ENCODE measurements at regions of chr6 and their contacts with region 1.

Region 1: DNA sequence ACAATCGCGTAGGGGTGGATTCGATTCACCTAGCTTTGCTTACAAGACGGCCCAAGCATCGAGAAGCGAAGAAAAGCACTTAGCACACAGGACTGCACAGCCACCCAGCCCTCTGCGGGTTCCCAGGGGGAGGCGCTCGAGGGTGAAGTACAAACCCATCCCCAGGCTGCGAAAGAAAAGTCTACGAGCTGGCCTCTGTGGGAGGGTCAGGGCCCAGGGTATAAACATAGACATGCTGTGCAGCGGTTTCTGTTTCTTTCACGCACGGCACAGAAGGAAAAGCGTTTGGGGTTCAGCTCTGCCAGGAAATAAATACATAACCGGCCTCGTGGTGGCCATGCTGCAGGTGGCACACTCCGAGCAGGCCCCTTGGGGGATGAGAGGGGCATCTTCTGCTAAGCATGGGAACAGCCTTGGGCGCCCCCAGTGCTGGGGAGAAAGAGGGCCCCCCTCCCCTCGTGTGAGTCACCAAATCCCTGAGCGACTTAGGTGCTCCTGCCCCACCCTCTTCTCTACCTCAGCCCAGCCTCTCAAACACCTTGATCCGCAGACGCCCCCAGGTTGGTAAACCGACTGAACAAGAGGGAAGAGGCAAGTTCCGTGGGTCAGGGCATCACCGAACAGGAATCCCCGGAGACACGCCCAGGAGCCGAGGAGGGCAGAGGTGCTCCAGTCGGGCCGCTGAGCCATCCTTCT is 91.6 kb upstream of the RIPOR2 start:
- DNase-seq: peak; percentile 90
- ATAC-seq: peak; percentile 95
- H3K4me3 Mint-ChIP-seq: peak overlapping the region; percentile 62
- H3K27ac Mint-ChIP-seq: peak overlapping the region; percentile 77
- H3K4me1 Mint-ChIP-seq: peaks cover 51% of the 10 kb centered on the region
- H3K27me3 Mint-ChIP-seq: no peaks in the 10 kb centered on the region

Region 2: DNA sequence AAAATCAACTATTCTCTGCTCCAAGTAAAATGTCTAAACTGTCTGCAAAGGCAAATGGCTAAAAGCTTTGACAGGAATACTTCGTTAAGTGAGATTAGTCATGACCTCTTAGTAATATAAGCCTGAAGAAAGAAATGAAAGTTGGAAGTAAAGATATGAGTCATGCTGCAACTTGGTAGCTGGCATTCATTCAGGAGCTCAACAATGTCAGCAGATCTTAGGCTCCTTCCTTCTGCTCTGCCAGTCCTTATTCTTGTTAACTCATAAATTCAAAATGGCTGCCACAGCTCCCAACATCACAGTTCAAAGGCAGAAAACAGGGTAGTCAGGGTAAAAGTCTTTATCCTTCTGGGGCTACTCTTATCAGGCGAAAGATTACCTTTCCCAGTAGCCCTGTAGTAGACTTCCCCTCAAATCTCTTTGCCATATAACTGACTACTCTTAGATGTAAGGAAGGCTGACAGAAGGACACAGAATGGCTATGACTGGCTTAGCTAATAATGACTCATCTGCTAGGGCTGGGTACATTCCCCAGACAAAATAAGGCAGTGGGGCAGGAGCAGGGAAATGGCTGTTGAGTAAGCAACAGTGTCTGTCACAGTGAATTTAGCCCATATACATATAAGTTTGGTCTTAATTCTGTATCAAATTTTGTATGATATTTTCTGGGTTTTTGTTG is 284.0 kb before region 1 on chr6:
- CTCF ChIA-PET with region 1: no interaction called
- POLR2A ChIA-PET with region 1: no interaction called
- intact Hi-C with region 1: loop called in 1 of 2 experiments (anchors 1 kb)
- DNase-seq: peak; percentile 61
- ATAC-seq: peak; percentile 94
- H3K4me3 Mint-ChIP-seq: peak overlapping the region; percentile 17
- H3K27ac Mint-ChIP-seq: peak overlapping the region; percentile 82
- H3K4me1 Mint-ChIP-seq: peaks cover 28% of the 10 kb centered on the region
- H3K27me3 Mint-ChIP-seq: no peaks in the 10 kb centered on the region

Region 3: DNA sequence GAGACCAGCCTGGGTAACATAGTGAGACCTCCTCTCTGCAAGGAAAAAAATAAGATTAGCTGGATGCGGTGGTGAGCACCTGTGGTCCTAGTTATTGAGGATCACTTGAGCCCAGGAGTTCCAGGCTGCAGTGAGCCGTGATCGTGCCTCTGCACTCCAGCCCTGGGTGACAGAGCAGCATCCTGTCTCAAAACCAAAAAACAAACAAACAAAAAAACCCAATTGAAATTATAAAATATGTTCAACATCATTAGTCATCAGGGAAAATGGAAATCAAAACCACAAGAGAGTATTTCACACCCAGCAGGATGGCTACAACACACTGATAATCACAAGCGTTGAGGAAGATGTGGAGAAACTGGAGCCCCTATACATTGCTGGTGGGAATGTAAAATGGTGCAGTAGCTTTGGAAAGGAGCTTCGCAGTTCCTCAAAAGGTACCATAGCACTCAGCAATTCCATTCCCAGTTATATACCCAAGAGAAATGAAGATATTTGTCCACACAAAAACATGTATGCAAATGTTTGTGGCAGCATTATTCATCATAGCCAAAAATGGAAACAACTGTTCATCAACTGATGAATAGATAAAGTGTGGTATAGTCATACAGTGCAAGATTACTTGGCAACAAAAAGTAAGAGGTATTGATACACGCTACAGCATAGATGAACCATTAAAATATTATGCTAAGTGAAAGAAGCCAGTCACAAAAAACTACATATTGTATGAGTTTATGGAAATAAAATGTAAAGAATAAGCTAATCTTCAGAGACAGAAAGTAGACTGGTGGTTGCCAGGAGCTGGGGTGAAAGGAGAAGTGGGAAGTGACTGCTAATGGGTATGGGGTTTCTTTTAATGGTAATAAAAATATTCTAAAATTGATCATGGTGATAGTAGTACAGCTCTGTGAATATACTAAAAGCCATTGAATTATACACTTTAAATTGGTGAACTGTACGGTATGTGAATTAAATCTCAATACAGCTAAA is 52.9 kb before region 1 on chr6:
- CTCF ChIA-PET with region 1: interaction called, 3 read pairs
- POLR2A ChIA-PET with region 1: interaction called, 4 read pairs
- intact Hi-C with region 1: loop called in 1 of 2 experiments (anchors 1 kb)
- DNase-seq: peak; percentile 60
- ATAC-seq: peak; percentile 92
- H3K4me3 Mint-ChIP-seq: peak overlapping the region; percentile 33
- H3K27ac Mint-ChIP-seq: peak overlapping the region; percentile 86
- H3K4me1 Mint-ChIP-seq: peaks cover 59% of the 10 kb centered on the region
- H3K27me3 Mint-ChIP-seq: no peaks in the 10 kb centered on the region

Region 4: DNA sequence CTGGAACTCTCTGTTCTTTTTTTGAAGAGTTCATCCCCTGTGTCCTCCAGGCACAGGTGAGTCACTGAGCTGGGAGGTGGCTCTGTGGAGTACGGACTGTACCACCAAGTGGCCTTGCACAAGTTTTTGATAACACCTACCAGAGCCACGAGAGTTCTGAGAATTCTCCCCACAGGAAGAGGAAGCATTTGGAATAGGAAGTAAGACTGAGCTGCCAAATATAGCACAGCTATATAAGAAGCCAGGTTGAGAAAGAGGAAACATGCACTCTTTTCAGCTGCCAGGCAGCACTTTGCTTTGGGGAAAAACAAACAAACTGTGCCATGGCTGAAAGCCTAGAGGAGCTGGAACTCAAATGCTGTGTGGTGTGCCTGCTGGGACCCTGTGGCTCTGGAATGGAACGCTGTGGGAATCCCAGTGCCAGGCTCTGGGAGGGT is 20.8 kb before region 1 on chr6:
- CTCF ChIA-PET with region 1: interaction called, 7 read pairs
- POLR2A ChIA-PET with region 1: no interaction called
- intact Hi-C with region 1: loop called in 1 of 2 experiments (anchors 1 kb)
- DNase-seq: peak; percentile 62
- ATAC-seq: peak; percentile 58
- H3K4me3 Mint-ChIP-seq: peak overlapping the region; percentile 32
- H3K27ac Mint-ChIP-seq: peak overlapping the region; percentile 79
- H3K4me1 Mint-ChIP-seq: peaks cover 83% of the 10 kb centered on the region
- H3K27me3 Mint-ChIP-seq: no peaks in the 10 kb centered on the region

Region 5: GRCh38 chr6:25042036-25042521 is 14.7 kb after region 1 on chr6:
- CTCF ChIA-PET with region 1: interaction called, 75 read pairs
- POLR2A ChIA-PET with region 1: no interaction called
- intact Hi-C with region 1: loop called (anchors 1 kb)
- DNase-seq: peak; percentile 70
- ATAC-seq: peak; percentile 60
- H3K4me3 Mint-ChIP-seq: peak overlapping the region; percentile 91
- H3K27ac Mint-ChIP-seq: peak overlapping the region; percentile 98
- H3K4me1 Mint-ChIP-seq: peaks cover 69% of the 10 kb centered on the region
- H3K27me3 Mint-ChIP-seq: no peaks in the 10 kb centered on the region

Region 6: DNA sequence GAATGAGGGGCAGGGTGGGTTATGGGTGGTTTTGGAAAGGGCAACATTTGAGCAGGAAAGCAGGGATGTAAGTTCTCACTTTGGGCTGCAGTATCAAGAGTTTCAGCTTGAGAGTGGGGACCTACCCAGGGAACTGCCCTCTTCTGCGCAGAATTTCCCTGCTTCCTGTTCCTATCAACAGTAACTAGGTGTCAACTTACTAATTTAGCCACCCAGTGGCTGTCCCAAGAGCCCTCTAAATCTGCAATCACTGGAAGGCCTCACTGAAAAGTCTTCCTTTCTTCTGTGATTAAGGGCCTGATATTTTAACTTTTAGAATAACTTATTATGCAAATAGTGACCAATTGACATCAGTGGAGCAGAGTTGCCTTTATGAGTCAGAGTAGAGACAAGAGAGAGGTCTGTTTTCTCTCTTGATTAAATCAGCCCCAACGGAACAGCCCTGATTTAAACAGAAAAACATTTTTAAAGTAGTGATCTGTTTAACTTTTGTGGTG is 26.6 kb after region 1 on chr6:
- CTCF ChIA-PET with region 1: interaction called, 8 read pairs
- POLR2A ChIA-PET with region 1: interaction called, 5 read pairs
- intact Hi-C with region 1: loop called in 1 of 2 experiments (anchors 1 kb)
- DNase-seq: peak; percentile 32
- ATAC-seq: peak; percentile 33
- H3K4me3 Mint-ChIP-seq: no peak overlapping the region
- H3K27ac Mint-ChIP-seq: peak overlapping the region; percentile 59
- H3K4me1 Mint-ChIP-seq: peaks cover 73% of the 10 kb centered on the region
- H3K27me3 Mint-ChIP-seq: no peaks in the 10 kb centered on the region

Region 7: GRCh38 chr6:25070547-25071366 is 43.4 kb after region 1 on chr6:
- CTCF ChIA-PET with region 1: interaction called, 70 read pairs
- POLR2A ChIA-PET with region 1: interaction called, 4 read pairs
- intact Hi-C with region 1: loop called (anchors 1 kb)
- DNase-seq: peak; percentile 88
- ATAC-seq: peak; percentile 94
- H3K4me3 Mint-ChIP-seq: no peak overlapping the region
- H3K27ac Mint-ChIP-seq: peak overlapping the region; percentile 47
- H3K4me1 Mint-ChIP-seq: peaks cover 4% of the 10 kb centered on the region
- H3K27me3 Mint-ChIP-seq: no peaks in the 10 kb centered on the region

Region 8: GRCh38 chr6:25417046-25417605 is 389.8 kb after region 1 on chr6:
- CTCF ChIA-PET with region 1: no interaction called
- POLR2A ChIA-PET with region 1: no interaction called
- intact Hi-C with region 1: no loop called
- DNase-seq: no peak
- ATAC-seq: no peak
- H3K4me3 Mint-ChIP-seq: no peak overlapping the region
- H3K27ac Mint-ChIP-seq: no peak overlapping the region
- H3K4me1 Mint-ChIP-seq: peaks cover 18% of the 10 kb centered on the region
- H3K27me3 Mint-ChIP-seq: no peaks in the 10 kb centered on the region

Region 9: GRCh38 chr6:25717866-25718740 is 690.7 kb after region 1 on chr6:
- CTCF ChIA-PET with region 1: no interaction called
- POLR2A ChIA-PET with region 1: no interaction called
- intact Hi-C with region 1: no loop called
- DNase-seq: no peak
- ATAC-seq: no peak
- H3K4me3 Mint-ChIP-seq: no peak overlapping the region
- H3K27ac Mint-ChIP-seq: no peak overlapping the region
- H3K4me1 Mint-ChIP-seq: peaks cover 3% of the 10 kb centered on the region
- H3K27me3 Mint-ChIP-seq: peaks cover 13% of the 10 kb centered on the region

Measured in activated CD4-positive, alpha-beta T cell treated with anti-CD3 and anti-CD28 coated beads for 36 hours (primary cell).